GM12878 (cell line): ENCODE measurements at regions of chr17 and their contacts with region 1.

Region 1: GRCh38 chr17:72465191-72466024 is 344.6 kb downstream of the SOX9 start:
- DNase-seq: peak; percentile 93
- ATAC-seq: peak; percentile 78
- H3K4me3 ChIP-seq: peak overlapping the region; percentile 10; the same call in 1 of the 2 replicates
- H3K27ac ChIP-seq: peak overlapping the region; percentile 78
- H3K4me1 ChIP-seq: peaks cover 41% of the 10 kb centered on the region
- H3K27me3 ChIP-seq: no peaks in the 10 kb centered on the region
- CTCF ChIP-seq: peak in 1 of 3 experiments; percentile 30; a peak in 1 of 6 replicates
- EP300 ChIP-seq: peak; percentile 38 to 66; a peak in 3 of 4 replicates
- POLR2A ChIP-seq: no peak
- RAD21 ChIP-seq: 0 out of 2 replicates have a peak, but pooled peaks have one; percentile 1

Region 2: DNA sequence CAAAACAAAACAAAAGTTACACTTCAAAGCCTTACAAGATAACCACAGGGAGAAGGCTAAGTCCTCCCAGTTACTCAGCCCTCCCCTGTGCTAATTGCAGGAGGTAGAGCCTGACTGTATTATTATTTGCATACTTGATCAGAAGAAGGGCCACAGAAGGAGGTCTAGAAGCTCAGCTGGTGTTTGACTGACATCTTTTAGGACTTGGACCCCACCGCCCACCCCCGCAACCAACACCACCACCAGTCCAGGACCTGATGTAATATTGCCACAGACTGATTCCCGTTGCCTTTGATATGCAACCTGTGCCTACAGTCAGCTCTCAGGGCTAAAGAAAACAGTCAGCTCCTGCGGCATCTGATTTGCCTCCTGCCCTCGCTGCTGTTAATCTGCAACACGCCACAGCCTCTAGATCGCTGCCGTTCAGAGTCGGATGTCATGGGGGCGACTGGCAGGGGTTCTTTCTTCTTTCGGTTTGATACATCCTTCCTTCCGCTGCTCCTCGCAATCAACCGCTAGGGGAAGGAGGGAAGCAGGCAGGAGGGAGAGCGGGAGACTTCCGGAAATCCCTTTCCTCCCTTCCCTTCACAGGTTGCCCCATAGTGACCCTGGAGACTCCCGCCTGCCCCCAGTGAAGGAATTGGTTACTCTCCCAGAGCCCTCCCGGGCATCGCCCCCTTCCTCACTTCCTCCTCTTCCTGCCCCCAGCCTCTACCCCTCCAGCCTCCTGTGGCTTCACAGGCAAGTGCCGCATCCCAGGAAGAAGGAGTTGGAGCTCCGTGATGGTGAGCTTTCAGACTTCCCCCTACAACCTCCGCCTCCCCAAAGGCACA is 435.1 kb before region 1 on chr17:
- CTCF ChIA-PET with region 1: no interaction called
- POLR2A ChIA-PET with region 1: interaction called, 6 read pairs
- RAD21 ChIA-PET with region 1: interaction called, 5 read pairs
- SMC1A ChIA-PET with region 1: no interaction called
- in situ Hi-C with region 1: no loop called
- intact Hi-C with region 1: loop called (anchors 5 kb)
- DNase-seq: peak; percentile 71
- ATAC-seq: peak; percentile 81
- H3K4me3 ChIP-seq: peak overlapping the region; percentile 80
- H3K27ac ChIP-seq: peak overlapping the region; percentile 91
- H3K4me1 ChIP-seq: peaks cover 45% of the 10 kb centered on the region
- H3K27me3 ChIP-seq: no peaks in the 10 kb centered on the region
- CTCF ChIP-seq: peak; percentile 30 to 48 (median 40); a peak in 4 of 6 replicates
- EP300 ChIP-seq: 0 out of 4 replicates have a peak, but pooled peaks of 1 of the 2 experiments have one; percentile 4
- POLR2A ChIP-seq: peak; percentile 65
- RAD21 ChIP-seq: peak; percentile 25; the same call in 1 of the 2 replicates

Region 3: DNA sequence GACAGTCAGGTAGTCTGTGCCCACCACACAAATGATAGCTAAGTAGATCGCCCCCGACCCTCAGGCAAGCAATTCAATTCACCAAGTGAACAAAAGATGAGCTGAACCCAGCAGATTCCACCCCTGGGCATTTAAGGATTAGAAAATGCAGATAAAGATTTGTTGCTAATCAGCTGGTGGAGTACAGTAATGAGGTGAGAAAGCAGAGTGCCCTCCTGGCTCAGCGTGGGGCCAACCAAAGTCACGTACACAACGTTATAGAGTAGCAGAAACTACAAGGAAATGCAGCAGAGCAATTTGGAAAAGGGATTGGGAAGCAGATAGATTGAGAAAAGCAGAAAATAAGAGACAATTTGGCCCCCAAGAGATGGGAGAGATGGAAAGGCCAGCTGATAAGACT is 253.4 kb before region 1 on chr17:
- CTCF ChIA-PET with region 1: no interaction called
- POLR2A ChIA-PET with region 1: no interaction called
- RAD21 ChIA-PET with region 1: no interaction called
- SMC1A ChIA-PET with region 1: no interaction called
- in situ Hi-C with region 1: no loop called
- intact Hi-C with region 1: no loop called
- DNase-seq: no peak
- ATAC-seq: no peak
- H3K4me3 ChIP-seq: no peak overlapping the region
- H3K27ac ChIP-seq: no peak overlapping the region
- H3K4me1 ChIP-seq: no peaks in the 10 kb centered on the region
- H3K27me3 ChIP-seq: no peaks in the 10 kb centered on the region
- CTCF ChIP-seq: no peak
- EP300 ChIP-seq: no peak
- POLR2A ChIP-seq: no peak
- RAD21 ChIP-seq: no peak

Region 4: GRCh38 chr17:72421128-72422092 is 44.0 kb before region 1 on chr17:
- CTCF ChIA-PET with region 1: interaction called, 101 read pairs
- POLR2A ChIA-PET with region 1: interaction called, 170 read pairs
- RAD21 ChIA-PET with region 1: interaction called, 320 read pairs
- SMC1A ChIA-PET with region 1: interaction called, 335 read pairs
- in situ Hi-C with region 1: loop called (anchors 5 kb)
- intact Hi-C with region 1: loop called (anchors 1 kb)
- DNase-seq: peak; percentile 94
- ATAC-seq: peak; percentile 44
- H3K4me3 ChIP-seq: peak overlapping the region; percentile 42; the same call in 1 of the 2 replicates
- H3K27ac ChIP-seq: peak overlapping the region; percentile 95
- H3K4me1 ChIP-seq: peaks cover 64% of the 10 kb centered on the region
- H3K27me3 ChIP-seq: no peaks in the 10 kb centered on the region
- CTCF ChIP-seq: no peak
- EP300 ChIP-seq: peak; percentile 97
- POLR2A ChIP-seq: peak; percentile 61
- RAD21 ChIP-seq: peak; percentile 12; the same call in 1 of the 2 replicates

Region 5: DNA sequence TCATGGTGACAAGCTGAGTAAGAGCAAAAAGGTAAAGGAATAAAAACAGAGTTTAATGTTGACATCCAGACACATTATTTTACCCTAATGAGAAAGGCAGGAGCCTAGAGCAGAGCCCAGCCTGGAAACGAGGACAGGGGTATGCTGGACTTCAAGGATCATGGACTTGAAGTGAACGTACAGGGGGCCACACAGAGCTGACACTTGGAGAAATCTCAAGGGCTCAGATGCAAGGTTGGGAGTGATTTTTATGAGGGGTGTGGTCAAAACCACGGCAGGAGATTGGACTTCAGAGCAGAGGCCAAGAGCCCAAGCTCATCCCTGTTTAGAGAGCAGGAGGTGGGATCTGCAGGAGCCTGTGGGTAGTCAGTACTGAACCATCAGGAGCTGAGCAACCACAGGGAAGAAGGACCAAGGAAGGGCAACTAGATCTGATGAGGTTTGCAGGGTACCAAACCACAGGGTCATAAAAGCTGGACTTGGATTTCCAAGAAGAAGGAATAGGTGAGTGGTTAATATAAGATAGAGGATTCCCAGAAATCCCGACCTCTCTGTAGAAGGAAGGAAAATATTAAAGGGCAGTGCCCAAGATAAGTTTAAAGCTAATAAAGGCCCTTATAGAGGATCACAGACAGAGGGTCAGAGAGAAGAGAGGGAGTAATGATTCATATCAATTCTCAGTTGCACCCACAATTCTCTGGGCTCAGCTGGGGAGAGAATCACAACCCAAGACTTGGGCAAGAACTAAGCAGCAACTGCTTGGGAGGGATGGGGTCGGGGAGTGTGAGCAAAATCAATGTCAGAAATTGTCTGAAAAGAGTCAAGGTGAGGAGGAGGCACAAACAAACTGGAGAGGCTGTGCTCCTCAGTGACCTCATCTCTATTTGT is 12.9 kb before region 1 on chr17:
- CTCF ChIA-PET with region 1: interaction called, 4 read pairs
- POLR2A ChIA-PET with region 1: interaction called, 4 read pairs
- RAD21 ChIA-PET with region 1: interaction called, 11 read pairs
- SMC1A ChIA-PET with region 1: interaction called, 15 read pairs
- in situ Hi-C with region 1: no loop called
- intact Hi-C with region 1: no loop called
- DNase-seq: no peak
- ATAC-seq: peak; percentile 84
- H3K4me3 ChIP-seq: no peak overlapping the region
- H3K27ac ChIP-seq: no peak overlapping the region
- H3K4me1 ChIP-seq: no peaks in the 10 kb centered on the region
- H3K27me3 ChIP-seq: no peaks in the 10 kb centered on the region; a peak in 1 of 4 replicates
- CTCF ChIP-seq: no peak
- EP300 ChIP-seq: no peak
- POLR2A ChIP-seq: no peak
- RAD21 ChIP-seq: no peak

Region 6: GRCh38 chr17:72498364-72499210 is 33.2 kb after region 1 on chr17:
- CTCF ChIA-PET with region 1: interaction called, 5 read pairs
- POLR2A ChIA-PET with region 1: no interaction called
- RAD21 ChIA-PET with region 1: interaction called, 22 read pairs
- SMC1A ChIA-PET with region 1: interaction called, 12 read pairs
- in situ Hi-C with region 1: no loop called
- intact Hi-C with region 1: no loop called
- DNase-seq: no peak
- ATAC-seq: peak; percentile 69
- H3K4me3 ChIP-seq: no peak overlapping the region
- H3K27ac ChIP-seq: no peak overlapping the region
- H3K4me1 ChIP-seq: no peaks in the 10 kb centered on the region; the same call in 1 of the 2 replicates
- H3K27me3 ChIP-seq: no peaks in the 10 kb centered on the region
- CTCF ChIP-seq: no peak
- EP300 ChIP-seq: no peak
- POLR2A ChIP-seq: no peak
- RAD21 ChIP-seq: no peak